Activated CD4-positive, alpha-beta memory T cell treated with anti-CD3 and anti-CD28 coated beads for 36 hours (primary cell): ENCODE measurements at regions of chr10 and their contacts with region 1.

Region 1: DNA sequence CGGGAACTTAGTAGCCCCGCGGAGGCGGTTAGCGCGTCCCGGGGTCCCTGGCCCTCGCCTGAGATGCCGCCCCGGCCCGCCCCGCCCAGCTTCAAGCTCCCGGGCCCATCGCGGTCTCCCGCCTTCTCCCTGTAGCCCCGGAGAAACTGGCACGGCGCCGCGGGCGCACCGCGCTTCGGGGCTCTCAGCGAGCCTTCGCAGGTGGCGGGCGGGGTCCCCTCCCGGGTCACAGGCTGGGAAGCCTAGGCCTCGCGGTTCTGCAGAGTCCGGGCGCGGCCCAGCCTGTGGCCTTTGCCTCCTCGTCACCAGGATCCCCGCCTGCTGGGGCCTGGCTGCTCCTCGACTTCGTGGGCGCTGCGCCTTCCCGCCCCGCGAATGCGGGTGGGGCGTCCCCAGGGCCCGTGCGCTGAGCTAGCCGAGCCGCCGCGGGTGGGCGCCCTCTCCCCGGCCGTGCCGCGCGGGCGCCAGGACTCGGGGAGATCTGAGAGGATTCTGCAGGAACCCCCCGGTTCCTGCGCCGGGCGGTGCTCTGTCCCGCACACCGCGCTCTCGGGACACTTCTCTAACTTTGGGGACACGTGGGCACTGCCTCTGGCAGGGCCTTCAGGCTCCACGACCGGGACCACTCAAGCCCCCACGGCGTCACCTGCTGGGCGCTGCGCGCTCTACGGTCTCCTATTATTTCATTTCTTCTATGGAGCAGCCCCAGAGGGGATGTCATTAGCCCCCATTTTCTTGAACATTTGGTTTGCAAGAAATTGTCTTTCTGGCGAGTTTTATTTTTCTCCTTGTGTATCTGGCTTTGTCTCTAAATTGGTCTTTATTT is 682 bp upstream of the RGS10 start:
- DNase-seq: peak; percentile 79
- H3K4me3 Mint-ChIP-seq: peak overlapping the region; percentile 81
- H3K27ac Mint-ChIP-seq: peak overlapping the region; percentile 87
- H3K4me1 Mint-ChIP-seq: peaks cover 33% of the 10 kb centered on the region
- H3K27me3 Mint-ChIP-seq: no peaks in the 10 kb centered on the region

Region 2: DNA sequence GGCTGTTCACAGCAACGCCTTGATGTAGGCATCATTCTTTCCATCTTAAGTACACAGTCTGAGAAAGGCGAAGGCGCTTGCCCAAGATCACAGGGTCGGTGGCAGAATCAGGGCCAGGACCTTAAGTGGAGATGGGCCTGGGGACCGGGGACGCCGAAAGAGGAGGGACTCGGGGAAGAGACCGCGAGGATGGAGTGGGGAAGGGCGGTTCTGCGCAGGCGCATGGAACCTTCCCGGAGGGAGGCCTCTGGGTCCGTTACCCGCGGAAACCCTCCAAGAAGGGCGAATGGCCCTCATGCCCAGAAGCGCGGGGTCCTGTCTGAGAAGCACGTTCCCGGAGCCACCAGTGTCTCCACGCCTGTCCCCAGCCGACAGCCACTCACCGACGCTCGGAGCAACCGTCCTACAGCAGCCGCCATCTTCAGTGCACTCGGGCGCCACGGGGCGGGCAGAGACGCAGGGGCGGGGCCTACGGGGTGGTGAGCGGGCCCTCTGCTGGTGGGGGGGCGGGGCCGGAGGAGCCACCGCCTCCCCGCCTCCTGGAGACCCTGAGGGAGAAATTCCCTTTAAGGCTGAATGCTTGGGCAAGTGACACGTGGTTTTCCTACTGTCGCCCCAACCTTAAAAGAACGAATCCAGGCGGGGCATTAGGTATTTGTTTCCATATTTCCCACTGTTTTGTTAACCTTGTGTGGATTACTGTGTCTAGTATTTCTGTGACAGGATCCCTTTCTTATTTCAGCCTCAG is 364.7 kb before region 1 on chr10 and contains the start of gene PRDX3:
- CTCF ChIA-PET with region 1: no interaction called
- POLR2A ChIA-PET with region 1: no interaction called
- intact Hi-C with region 1: loop called (anchors 5 kb)
- DNase-seq: peak; percentile 96
- H3K4me3 Mint-ChIP-seq: peak within 1 kb of the TSS; percentile 88
- H3K27ac Mint-ChIP-seq: peak within 1 kb of the TSS; percentile 94
- H3K4me1 Mint-ChIP-seq: peaks cover 35% of the 10 kb centered on the region
- H3K27me3 Mint-ChIP-seq: no peaks in the 10 kb centered on the region
- total RNA-seq, gene PRDX3: 173 to 182 TPM

Region 3: GRCh38 chr10:119320981-119321380 is 222.2 kb before region 1 on chr10:
- CTCF ChIA-PET with region 1: no interaction called
- POLR2A ChIA-PET with region 1: no interaction called
- intact Hi-C with region 1: no loop called
- DNase-seq: no peak
- H3K4me3 Mint-ChIP-seq: no peak overlapping the region
- H3K27ac Mint-ChIP-seq: no peak overlapping the region
- H3K4me1 Mint-ChIP-seq: peaks cover 17% of the 10 kb centered on the region
- H3K27me3 Mint-ChIP-seq: no peaks in the 10 kb centered on the region

Region 4: GRCh38 chr10:119478111-119478802 is 64.9 kb before region 1 on chr10:
- CTCF ChIA-PET with region 1: interaction called, 3 read pairs
- POLR2A ChIA-PET with region 1: no interaction called
- intact Hi-C with region 1: loop called (anchors 1 kb)
- DNase-seq: peak; percentile 67
- H3K4me3 Mint-ChIP-seq: peak overlapping the region; percentile 17
- H3K27ac Mint-ChIP-seq: peak overlapping the region; percentile 49
- H3K4me1 Mint-ChIP-seq: peaks cover 33% of the 10 kb centered on the region
- H3K27me3 Mint-ChIP-seq: no peaks in the 10 kb centered on the region

Region 5: GRCh38 chr10:119517235-119518141 is 25.7 kb before region 1 on chr10:
- CTCF ChIA-PET with region 1: interaction called, 26 read pairs
- POLR2A ChIA-PET with region 1: interaction called, 20 read pairs
- intact Hi-C with region 1: loop called (anchors 1 kb)
- DNase-seq: peak; percentile 85
- H3K4me3 Mint-ChIP-seq: peak overlapping the region; percentile 55
- H3K27ac Mint-ChIP-seq: peak overlapping the region; percentile 85
- H3K4me1 Mint-ChIP-seq: peaks cover 59% of the 10 kb centered on the region
- H3K27me3 Mint-ChIP-seq: no peaks in the 10 kb centered on the region

Region 6: DNA sequence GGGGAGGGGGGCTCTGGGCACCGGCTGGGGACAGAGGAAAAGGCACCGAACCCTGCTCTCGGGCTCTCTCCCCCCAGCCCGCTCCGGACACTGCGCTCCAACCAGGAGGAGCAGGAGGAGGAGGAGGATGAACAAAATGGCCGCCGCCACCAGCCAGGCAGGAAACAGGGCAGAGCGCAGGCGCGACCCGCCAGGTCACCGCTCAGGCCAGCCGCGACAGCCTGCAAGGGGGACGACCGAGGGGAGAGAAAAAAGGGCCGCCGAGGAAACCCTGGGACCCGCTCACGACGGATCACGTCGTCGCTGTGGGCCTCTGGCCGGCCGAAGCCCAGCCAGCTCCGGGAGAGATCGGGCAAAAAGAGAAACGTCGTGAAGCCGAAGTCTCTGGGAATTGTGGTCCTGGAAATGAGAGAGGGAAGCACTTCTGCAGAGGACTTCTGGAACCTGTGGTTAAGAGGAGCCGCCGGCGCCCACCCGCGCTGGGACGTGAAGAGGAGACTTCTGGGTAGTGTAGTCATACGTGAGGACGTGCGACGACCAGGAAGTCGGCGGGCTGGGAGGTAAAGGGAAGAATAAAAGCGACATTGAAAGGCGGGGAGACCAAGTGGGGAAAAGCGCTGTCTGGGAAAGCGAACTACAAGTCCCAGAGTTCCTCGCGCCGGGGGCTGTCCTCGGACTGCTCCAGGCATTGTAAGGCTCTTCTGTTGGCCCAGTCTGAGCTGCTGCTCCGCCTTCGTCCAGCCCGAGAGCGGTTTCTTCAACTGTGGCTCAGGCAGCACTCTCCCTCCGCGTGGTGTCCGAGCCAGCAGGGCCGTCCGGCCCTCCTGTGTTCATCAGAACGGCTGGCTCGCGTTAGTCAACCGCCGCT is 53.6 kb after region 1 on chr10 and contains the start of gene TIAL1:
- CTCF ChIA-PET with region 1: interaction called, 7 read pairs
- POLR2A ChIA-PET with region 1: interaction called, 4 read pairs
- intact Hi-C with region 1: loop called (anchors 1 kb)
- DNase-seq: peak; percentile 97
- H3K4me3 Mint-ChIP-seq: peak within 1 kb of the TSS; percentile 89
- H3K27ac Mint-ChIP-seq: peak within 1 kb of the TSS; percentile 97
- H3K4me1 Mint-ChIP-seq: peaks cover 42% of the 10 kb centered on the region
- H3K27me3 Mint-ChIP-seq: no peaks in the 10 kb centered on the region
- total RNA-seq, gene TIAL1: 177 TPM